H1 (cell line): ENCODE measurements at regions of chr1 and their contacts with region 1.

Region 1: DNA sequence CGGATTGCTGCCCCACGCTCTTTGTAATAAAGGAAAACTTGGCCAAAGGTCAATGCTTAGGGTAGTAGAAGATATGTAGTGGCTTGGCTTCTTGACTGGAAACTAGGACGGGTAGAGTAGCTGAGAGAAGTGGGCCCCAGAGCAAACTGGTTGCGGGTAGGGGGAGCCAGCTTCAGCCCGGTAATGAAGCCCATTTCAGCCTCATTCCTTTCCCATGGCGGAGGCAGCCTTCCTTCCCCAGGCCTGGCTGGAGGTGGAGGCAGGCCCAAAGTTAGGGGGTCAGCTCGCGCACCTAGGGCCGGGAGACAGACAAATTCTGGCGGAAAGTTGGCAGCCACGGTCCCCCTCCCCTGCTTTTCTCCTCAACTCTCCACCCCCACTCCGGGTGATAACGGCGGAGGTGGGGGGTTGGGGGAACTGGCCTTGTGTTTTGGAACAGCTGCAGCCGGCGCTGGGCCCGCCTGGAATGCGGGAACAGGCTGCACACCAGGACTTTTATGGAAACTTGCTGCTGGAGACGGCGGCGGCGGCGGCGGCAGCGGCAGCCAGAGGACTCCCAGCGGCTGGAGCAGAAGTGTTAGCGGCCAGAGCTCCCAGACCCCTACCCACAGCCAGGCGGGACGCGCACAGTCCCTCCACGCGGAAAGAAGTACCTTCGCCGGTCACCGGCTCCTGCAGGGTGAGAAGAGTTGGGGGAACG is at the start of gene NEXN:
- DNase-seq: peak; percentile 53 to 81
- H3K4me3 ChIP-seq: peak within 1 kb of the TSS; percentile 70 to 93 (median 90)
- H3K27ac ChIP-seq: peak within 1 kb of the TSS; percentile 46; the same call in 1 of the 2 replicates
- H3K4me1 ChIP-seq: peaks cover 0 to 3% (median 0%) of the 10 kb centered on the region in 4 experiments; a peak in 1 of 7 replicates
- H3K27me3 ChIP-seq: no peaks in the 10 kb centered on the region
- CTCF ChIP-seq: no peak
- EP300 ChIP-seq: peak in 1 of 2 experiments; percentile 66; a peak in 1 of 3 replicates
- POLR2A ChIP-seq: peak; percentile 49 to 73
- RAD21 ChIP-seq: no peak
- total RNA-seq, gene NEXN: 2.6 and 2.9 TPM in 2 replicates

Region 2: DNA sequence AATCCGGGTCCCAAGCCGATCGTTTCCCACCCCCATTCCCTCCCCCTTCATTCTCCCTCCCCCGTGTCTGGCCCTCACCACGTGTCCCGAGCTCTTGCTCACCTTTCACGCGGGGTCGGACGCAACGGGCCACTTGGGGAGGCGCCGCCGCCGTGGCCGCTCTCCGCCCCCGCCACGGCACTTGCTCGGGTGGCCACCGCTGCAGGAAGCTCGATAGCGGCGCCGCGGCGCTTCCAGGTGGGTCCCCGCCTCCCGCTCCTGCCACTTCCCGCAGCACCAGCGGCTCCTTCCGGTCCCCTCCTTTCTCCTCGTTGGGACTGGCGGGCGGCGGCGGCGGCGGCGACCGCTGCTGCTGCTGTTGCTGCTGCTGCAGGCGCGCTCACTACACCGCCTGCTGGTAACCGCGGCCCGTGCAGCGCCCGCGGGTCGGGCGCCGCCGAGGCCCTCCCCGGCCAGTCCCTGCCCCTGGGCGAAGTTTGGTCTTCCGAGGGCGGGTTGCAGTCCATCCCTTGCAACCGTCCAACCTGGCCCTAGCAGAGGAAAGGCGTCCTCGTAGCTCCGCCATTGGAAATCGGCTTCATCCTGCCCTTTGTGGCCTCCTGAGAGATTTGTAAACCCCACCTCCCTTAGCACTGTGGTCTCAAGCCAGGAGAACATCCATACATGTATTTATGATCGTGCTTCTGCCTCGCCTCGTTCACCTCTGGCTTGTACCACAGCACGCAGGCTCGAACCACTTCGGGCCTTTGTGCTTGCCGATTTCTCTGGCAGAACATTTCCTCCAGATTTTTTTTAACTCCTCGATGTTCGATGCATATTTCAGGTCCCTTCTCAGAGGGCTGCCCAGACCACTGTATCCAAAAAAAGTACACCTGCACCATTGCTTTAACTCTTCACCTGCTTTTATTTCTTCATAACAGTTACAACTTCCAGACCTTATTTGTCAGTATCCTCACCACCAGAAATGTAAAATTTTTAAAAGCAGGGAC is 204.8 kb before region 1 on chr1:
- CTCF ChIA-PET with region 1: no interaction called
- POLR2A ChIA-PET with region 1: interaction called, 10 read pairs
- DNase-seq: peak; percentile 75 to 90
- H3K4me3 ChIP-seq: peak overlapping the region; percentile 74 to 98 (median 92)
- H3K27ac ChIP-seq: peak overlapping the region; percentile 95
- H3K4me1 ChIP-seq: no peaks in the 10 kb centered on the region; a peak in 2 of 7 replicates
- H3K27me3 ChIP-seq: no peaks in the 10 kb centered on the region
- CTCF ChIP-seq: peak; percentile 70 to 83 (median 75)
- EP300 ChIP-seq: peak in 1 of 2 experiments; percentile 45; a peak in 1 of 3 replicates
- POLR2A ChIP-seq: peak; percentile 47 to 85
- RAD21 ChIP-seq: peak; percentile 54 to 69

Region 3: DNA sequence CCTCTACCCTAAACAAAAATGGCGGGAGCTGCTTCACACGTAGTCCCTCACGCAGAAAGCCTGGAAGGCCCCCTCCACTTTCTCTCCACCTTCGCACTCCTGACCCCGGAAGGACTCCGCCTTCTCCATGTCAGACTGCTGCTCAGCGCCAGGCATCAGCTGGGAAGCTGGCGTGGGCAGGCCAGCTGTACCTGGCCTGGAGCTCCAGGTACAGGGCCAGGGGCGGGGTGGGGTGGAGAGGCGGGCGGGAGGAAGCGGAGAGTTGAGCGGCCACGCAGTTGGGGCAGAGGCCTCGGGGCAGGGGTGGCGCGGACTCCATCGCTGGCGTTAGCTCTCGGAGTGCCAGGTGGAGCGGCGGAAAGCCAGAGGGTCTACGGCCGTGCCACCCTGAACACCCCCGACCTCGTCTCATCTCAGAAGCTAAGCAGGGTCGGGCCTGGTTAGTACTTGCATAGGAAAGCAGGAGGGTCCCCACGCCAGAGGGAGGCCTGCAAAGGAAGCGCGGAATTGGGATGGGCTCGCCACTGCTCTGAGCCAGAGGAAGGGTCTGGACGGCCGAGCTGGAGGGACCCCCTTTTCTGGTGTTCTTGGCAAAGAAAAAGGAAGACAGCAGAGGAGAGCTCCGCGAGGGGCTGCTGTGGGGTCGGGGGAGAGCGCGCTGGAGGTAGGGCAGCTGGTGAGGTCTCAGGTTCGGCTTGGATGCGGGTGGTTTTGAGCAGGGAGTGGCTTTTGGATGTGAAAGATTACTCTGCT is 108.5 kb before region 1 on chr1 and contains the start of gene MIGA1:
- CTCF ChIA-PET with region 1: no interaction called
- POLR2A ChIA-PET with region 1: interaction called, 11 read pairs
- DNase-seq: peak; percentile 86
- H3K4me3 ChIP-seq: peak within 1 kb of the TSS; percentile 49 to 95 (median 92)
- H3K27ac ChIP-seq: no peak within 1 kb of the TSS
- H3K4me1 ChIP-seq: no peaks in the 10 kb centered on the region
- H3K27me3 ChIP-seq: no peaks in the 10 kb centered on the region
- CTCF ChIP-seq: no peak
- EP300 ChIP-seq: no peak
- POLR2A ChIP-seq: no peak; a peak in 1 of 3 replicates
- RAD21 ChIP-seq: peak in 1 of 2 experiments; percentile 15; a peak in 1 of 4 replicates
- total RNA-seq, gene MIGA1: 6.1 and 7.0 TPM in 2 replicates